ENCODE measurements at regions of chr2 and their contacts with region 1.

Region 1: GRCh38 chr2:27133905-27134780 is at the start of gene PREB:
- DNase-seq: peak; percentile 100
- ATAC-seq: peak; percentile 96
- H3K4me3 Mint-ChIP-seq: peak within 1 kb of the TSS; percentile 97
- H3K27ac Mint-ChIP-seq: peak within 1 kb of the TSS; percentile 97
- H3K4me1 Mint-ChIP-seq: peaks cover 17% of the 10 kb centered on the region
- H3K27me3 Mint-ChIP-seq: no peaks in the 10 kb centered on the region
- total RNA-seq, gene PREB: 51.7 to 53.9 TPM

Region 2: GRCh38 chr2:27123302-27124231 is 10.6 kb before region 1 on chr2 and contains the start of gene ABHD1:
- POLR2A ChIA-PET with region 1: interaction called, 34 read pairs
- DNase-seq: peak; percentile 79
- ATAC-seq: peak; percentile 81
- H3K4me3 Mint-ChIP-seq: peak within 1 kb of the TSS; percentile 81
- H3K27ac Mint-ChIP-seq: peak within 1 kb of the TSS; percentile 75
- H3K4me1 Mint-ChIP-seq: peaks cover 15% of the 10 kb centered on the region
- H3K27me3 Mint-ChIP-seq: peaks cover 32% of the 10 kb centered on the region
- total RNA-seq, gene ABHD1: 0.77 to 1.4 TPM

Region 3: GRCh38 chr2:27174316-27175040 is 40.3 kb after region 1 on chr2:
- POLR2A ChIA-PET with region 1: no interaction called
- DNase-seq: no peak
- ATAC-seq: no peak
- H3K4me3 Mint-ChIP-seq: no peak overlapping the region
- H3K27ac Mint-ChIP-seq: no peak overlapping the region
- H3K4me1 Mint-ChIP-seq: peaks cover 4% of the 10 kb centered on the region
- H3K27me3 Mint-ChIP-seq: peaks cover 37% of the 10 kb centered on the region

Region 4: DNA sequence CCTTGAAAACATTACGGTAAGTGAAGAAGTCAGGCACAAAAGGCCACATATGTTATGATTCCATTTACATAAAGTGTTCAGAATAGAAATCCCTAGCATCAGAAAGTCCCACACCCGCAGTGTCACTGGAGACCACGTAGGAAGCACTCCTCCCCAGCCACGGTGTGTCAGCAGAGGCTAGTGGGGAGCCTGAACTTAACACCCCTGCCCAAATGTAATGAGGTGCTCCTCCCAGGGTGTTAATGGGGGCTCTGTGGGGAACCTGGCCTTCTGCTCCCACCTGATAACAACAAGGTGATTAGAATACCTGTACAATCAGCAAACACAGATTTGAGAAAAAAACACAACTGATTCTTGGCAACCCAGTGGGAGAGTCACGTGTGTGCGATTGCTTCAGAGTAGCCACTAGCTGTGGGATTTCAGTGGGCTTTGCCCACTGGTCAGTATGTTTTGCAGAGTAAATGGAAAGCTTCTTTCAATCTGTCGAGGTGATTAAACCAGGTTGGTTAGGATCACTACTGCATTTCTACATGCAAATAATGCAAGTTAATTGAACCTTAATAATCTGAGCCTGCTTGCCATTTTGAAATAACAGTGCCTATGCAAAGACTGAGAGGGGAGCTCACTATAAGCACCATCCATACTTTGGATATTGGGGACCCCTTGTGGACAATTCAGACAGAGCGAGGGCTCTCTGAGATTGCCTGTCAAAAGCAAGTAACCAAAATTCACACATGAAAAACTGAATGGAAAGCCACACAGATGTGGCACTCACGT is 57.1 kb after region 1 on chr2:
- POLR2A ChIA-PET with region 1: no interaction called
- DNase-seq: no peak
- ATAC-seq: peak; percentile 95
- H3K4me3 Mint-ChIP-seq: no peak overlapping the region
- H3K27ac Mint-ChIP-seq: no peak overlapping the region
- H3K4me1 Mint-ChIP-seq: no peaks in the 10 kb centered on the region
- H3K27me3 Mint-ChIP-seq: peaks cover 16% of the 10 kb centered on the region

Region 5: DNA sequence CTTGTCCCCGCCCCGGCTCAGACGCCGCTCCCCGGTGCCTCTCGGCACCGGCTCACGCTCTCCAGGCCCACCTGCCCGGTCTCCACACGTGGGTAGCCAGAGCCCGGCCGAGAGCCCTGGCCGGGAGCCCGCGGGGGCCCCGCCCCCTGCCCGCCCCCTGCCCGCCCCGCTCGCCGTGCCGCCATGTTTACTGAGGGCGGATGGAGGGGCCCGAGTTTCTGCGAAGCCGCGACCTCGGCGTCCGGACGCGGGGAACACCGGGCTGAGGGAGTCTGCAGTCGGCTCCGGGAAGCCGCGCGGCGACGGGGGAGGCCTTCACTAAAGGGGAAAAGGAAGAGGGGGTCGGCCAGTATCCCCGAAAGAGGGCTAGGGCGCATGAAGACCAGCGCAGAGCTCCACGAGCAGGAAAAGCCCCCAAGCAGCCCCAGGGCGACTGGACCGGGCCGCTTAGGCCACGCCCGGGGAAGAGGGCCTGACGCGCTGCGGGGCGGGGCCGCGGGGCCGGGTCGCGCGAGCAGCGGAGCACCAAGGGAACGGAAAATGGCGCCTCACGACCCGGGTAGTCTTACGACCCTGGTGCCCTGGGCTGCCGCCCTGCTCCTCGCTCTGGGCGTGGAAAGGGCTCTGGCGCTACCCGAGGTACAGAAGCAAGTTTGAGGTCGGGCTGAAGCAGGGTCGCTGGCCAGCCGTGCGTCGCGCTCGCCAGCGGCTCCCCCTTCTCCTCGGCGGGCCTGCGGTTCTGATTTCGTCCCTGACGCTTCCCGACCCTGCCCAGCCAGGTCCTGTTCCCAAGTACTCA is 77.9 kb after region 1 on chr2 and contains the starts of genes ATRAID and SLC5A6:
- POLR2A ChIA-PET with region 1: interaction called, 12 read pairs
- DNase-seq: peak; percentile 96
- ATAC-seq: peak; percentile 91
- H3K4me3 Mint-ChIP-seq: peak within 1 kb of the TSS; percentile 99
- H3K27ac Mint-ChIP-seq: peak within 1 kb of the TSS; percentile 100
- H3K4me1 Mint-ChIP-seq: peaks cover 28% of the 10 kb centered on the region
- H3K27me3 Mint-ChIP-seq: no peaks in the 10 kb centered on the region
- total RNA-seq, gene ATRAID: 74.9 to 84.6 TPM
- total RNA-seq, gene SLC5A6: 31.6 to 32.2 TPM

Measured in activated naive CD8-positive, alpha-beta T cell treated with anti-CD3 and anti-CD28 coated beads, Interleukin-2, amount 10 ng/mL, durations not matched to agents 7 days and 5 days (primary cell).